Heart left ventricle (tissue), 16 donors: ENCODE measurements at regions of chr3 and their contacts with region 1.

Region 1: DNA sequence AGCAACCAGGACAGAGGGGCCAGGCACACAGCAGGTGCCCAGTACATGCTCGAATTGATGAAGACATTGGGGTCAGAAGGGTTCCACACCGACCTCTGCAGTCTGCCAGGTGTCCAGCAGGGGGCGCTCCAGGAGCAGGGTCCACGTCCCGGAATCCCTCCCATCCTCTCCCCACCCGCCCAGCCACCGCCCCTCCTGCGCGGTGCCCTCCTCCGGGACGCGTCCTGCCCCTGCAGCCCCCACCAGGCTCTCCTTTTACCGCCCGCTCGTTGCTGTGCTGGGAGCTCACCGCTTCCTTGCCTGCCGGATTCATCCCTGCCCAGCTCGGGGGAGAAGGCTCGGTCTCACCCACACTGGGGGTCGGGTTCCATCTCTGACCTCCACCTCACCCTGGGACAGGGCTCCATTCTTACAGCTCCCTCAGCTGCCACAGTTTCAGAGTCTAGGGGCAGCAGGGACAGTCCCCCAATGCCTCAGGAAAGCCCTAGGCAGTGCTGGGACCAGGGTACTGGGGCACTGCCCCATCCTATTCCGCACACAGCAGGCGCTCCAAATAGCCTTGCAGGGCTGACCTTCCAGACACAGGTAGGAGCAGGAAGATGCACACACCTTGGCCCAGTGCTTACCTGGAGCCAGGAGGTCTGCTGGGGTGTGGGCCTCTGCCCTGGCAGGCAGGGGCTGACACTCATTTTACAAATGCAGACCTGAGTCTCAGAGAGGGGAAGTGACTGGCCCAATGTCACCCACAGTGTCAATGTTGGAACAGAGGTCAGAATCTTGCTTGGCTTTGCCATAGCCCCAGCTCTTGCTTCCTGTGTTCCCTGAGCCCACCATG is 31.0 kb downstream of the GRIP2 start:
- DNase-seq: peak; percentile 71 to 88 (median 73)
- ATAC-seq: peak; percentile 54 to 78 (median 71)
- H3K4me3 ChIP-seq: peak overlapping the region in 1 of 12 donors; percentile 11
- H3K27ac ChIP-seq: peak overlapping the region in 2 of 12 donors; percentile 23 to 38
- H3K4me1 ChIP-seq: peaks cover 0 to 27% (median 4%) of the 10 kb centered on the region in 12 donors
- H3K27me3 ChIP-seq: no peaks in the 10 kb centered on the region
- CTCF ChIP-seq: peak; percentile 88 to 99 (median 96)
- POLR2A ChIP-seq: no peak

Region 2: DNA sequence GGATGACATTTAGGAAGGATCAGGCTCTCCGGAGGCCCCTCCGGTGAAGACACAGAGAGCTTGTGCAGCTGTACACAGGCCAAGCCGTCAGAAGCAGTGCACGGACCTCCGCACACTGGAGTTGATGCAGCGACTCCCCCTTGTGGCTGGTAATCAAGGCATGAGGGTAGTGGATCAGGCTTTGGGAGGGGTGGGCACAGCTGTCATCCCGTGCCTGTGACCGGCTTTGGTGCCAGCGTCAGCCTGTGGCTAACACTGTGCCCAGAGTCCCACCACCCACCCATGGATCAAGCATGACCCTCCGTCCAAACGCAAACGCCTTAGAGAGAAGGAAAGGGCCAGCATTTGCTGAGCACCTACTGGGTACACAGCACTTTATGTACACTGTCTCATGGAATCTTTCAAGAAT is 39.1 kb after region 1 on chr3:
- intact Hi-C with region 1: loop called (anchors 1 to 2 kb)
- DNase-seq: peak; percentile 68 to 88 (median 80)
- ATAC-seq: peak; percentile 83 to 91 (median 88)
- H3K4me3 ChIP-seq: no peak overlapping the region
- H3K27ac ChIP-seq: peak overlapping the region in 3 of 12 donors; percentile 14 to 64 (median 59)
- H3K4me1 ChIP-seq: peaks cover 0 to 28% (median 10%) of the 10 kb centered on the region in 12 donors
- H3K27me3 ChIP-seq: no peaks in the 10 kb centered on the region
- CTCF ChIP-seq: peak; percentile 64 to 86 (median 77)
- POLR2A ChIP-seq: no peak

Region 3: GRCh38 chr3:14633819-14634424 is 124.7 kb after region 1 on chr3:
- intact Hi-C with region 1: loop called in 1 of 10 experiments (anchors 10 kb)
- DNase-seq: peak in 4 of 5 donors; percentile 25 to 68 (median 52)
- ATAC-seq: peak in 3 of 4 donors; percentile 67 to 75 (median 67)
- H3K4me3 ChIP-seq: no peak overlapping the region
- H3K27ac ChIP-seq: no peak overlapping the region
- H3K4me1 ChIP-seq: no peaks in the 10 kb centered on the region
- H3K27me3 ChIP-seq: peaks cover 0 to 15% (median 3%) of the 10 kb centered on the region in 9 donors
- CTCF ChIP-seq: peak; percentile 58 to 88 (median 74)
- POLR2A ChIP-seq: no peak

Region 4: DNA sequence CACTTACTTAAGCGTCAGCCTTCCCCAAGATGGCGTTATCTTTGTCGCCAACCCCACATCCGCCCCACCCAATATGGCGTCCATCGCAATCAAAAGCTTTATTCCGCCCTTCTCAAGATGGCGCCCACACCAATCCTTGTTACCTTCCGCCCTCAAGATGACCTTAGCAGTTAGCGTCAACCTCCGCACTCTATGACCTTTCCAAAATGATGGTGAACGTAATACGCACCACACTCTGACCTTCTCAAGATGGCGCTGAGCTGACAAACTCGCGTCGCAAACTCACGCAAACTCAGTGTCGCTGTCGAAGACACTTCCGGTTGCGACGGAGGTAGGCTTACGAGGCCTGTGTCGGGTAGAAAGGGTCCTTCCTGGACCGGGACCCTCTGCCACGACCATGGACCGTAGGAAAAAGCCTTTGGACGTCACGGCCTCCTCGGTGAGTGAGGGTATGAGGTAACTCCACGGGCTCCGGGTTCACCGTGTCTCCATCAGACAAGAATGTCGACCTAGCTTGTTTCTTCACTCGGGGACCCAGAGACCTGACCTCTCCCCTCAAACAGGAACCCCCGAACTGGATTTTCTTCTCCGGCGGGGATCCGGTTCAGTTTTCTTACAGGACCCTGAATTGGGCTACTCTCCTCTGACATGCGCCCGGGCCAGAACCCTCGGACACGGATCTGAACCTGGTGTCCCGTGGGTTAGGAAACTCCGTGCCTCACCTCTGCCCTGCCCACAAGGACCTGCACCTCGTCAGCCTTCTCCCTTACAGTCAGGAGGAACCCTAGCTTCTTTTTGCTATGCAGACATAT is 142.5 kb after region 1 on chr3 and contains the start of gene CCDC174:
- intact Hi-C with region 1: loop called in 2 of 10 experiments (anchors 5 to 10 kb)
- DNase-seq: peak; percentile 92 to 97 (median 96)
- ATAC-seq: peak; percentile 98 to 99 (median 98)
- H3K4me3 ChIP-seq: peak within 1 kb of the TSS; percentile 59 to 93 (median 81)
- H3K27ac ChIP-seq: peak within 1 kb of the TSS; percentile 58 to 96 (median 90)
- H3K4me1 ChIP-seq: peaks cover 0 to 43% (median 32%) of the 10 kb centered on the region in 12 donors
- H3K27me3 ChIP-seq: no peaks in the 10 kb centered on the region
- CTCF ChIP-seq: peak in 1 of 12 donors; percentile 15
- POLR2A ChIP-seq: peak in 1 of 2 donors; percentile 74
- total RNA-seq, gene CCDC174: 8.7 to 16.1 (median 11.7) TPM

Region 5: DNA sequence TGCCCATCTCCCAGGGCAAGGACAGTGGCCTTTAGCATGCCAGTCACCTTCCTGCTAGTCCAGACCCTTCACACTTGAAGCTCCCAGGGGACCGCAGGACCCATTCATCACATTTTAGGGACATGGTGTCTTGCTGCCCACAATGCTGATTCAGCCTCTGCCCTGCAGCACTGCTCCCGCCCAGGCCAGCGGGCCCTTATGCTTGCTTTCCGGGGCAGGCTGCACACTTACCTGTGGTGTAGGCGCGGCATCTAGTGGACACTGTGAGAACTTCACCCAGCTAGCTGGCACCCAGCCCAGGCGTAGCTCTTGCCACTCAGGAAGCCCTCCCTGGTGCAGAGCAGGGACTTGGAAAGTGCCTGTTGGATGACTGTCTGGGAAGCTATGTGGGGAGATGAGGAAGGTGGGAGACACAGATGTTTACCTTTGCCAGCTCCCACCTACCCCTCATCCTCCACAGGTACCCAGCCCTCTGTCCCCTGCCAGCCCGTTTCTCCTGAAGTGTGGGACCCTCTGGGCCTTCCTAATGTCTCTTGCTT is 412.0 kb after region 1 on chr3:
- intact Hi-C with region 1: loop called in 3 of 10 experiments (anchors 5 to 10 kb)
- DNase-seq: peak; percentile 87 to 94 (median 87)
- ATAC-seq: peak; percentile 88 to 94 (median 94)
- H3K4me3 ChIP-seq: no peak overlapping the region
- H3K27ac ChIP-seq: no peak overlapping the region
- H3K4me1 ChIP-seq: peaks cover 0 to 10% (median 6%) of the 10 kb centered on the region in 12 donors
- H3K27me3 ChIP-seq: no peaks in the 10 kb centered on the region
- CTCF ChIP-seq: peak in 11 of 12 donors; percentile 96 to 99 (median 98)
- POLR2A ChIP-seq: no peak